CD8-positive, alpha-beta T cell (primary cell): ENCODE measurements at regions of chrX and their contacts with region 1.

Region 1: GRCh38 chrX:128007882-128008281 is 44.3 kb downstream of the ACTRT1 start:
- DNase-seq: no peak
- ATAC-seq: no peak
- H3K4me3 ChIP-seq: no peak overlapping the region
- H3K4me3 Mint-ChIP-seq: no peak overlapping the region
- H3K27ac ChIP-seq: no peak overlapping the region
- H3K27ac Mint-ChIP-seq: no peak overlapping the region
- H3K4me1 ChIP-seq: no peaks in the 10 kb centered on the region
- H3K4me1 Mint-ChIP-seq: no peaks in the 10 kb centered on the region
- H3K27me3 ChIP-seq: no peaks in the 10 kb centered on the region
- H3K27me3 Mint-ChIP-seq: no peaks in the 10 kb centered on the region
- CTCF ChIP-seq: no peak

Region 2: GRCh38 chrX:127888767-127889166 is 119.1 kb before region 1 on chrX:
- CTCF ChIA-PET with region 1: no interaction called
- POLR2A ChIA-PET with region 1: no interaction called
- intact Hi-C with region 1: no loop called
- DNase-seq: no peak
- ATAC-seq: no peak
- H3K4me3 ChIP-seq: no peak overlapping the region
- H3K4me3 Mint-ChIP-seq: no peak overlapping the region
- H3K27ac ChIP-seq: no peak overlapping the region
- H3K27ac Mint-ChIP-seq: no peak overlapping the region
- H3K4me1 ChIP-seq: no peaks in the 10 kb centered on the region
- H3K4me1 Mint-ChIP-seq: no peaks in the 10 kb centered on the region
- H3K27me3 ChIP-seq: no peaks in the 10 kb centered on the region
- H3K27me3 Mint-ChIP-seq: no peaks in the 10 kb centered on the region
- CTCF ChIP-seq: no peak

Region 3: GRCh38 chrX:127947450-127947849 is 60.4 kb before region 1 on chrX:
- CTCF ChIA-PET with region 1: no interaction called
- POLR2A ChIA-PET with region 1: no interaction called
- intact Hi-C with region 1: loop called in 1 of 2 experiments (anchors 2 kb)
- DNase-seq: no peak
- ATAC-seq: no peak
- H3K4me3 ChIP-seq: no peak overlapping the region
- H3K4me3 Mint-ChIP-seq: no peak overlapping the region
- H3K27ac ChIP-seq: no peak overlapping the region
- H3K27ac Mint-ChIP-seq: no peak overlapping the region
- H3K4me1 ChIP-seq: no peaks in the 10 kb centered on the region
- H3K4me1 Mint-ChIP-seq: no peaks in the 10 kb centered on the region
- H3K27me3 ChIP-seq: no peaks in the 10 kb centered on the region
- H3K27me3 Mint-ChIP-seq: no peaks in the 10 kb centered on the region
- CTCF ChIP-seq: no peak